B cell (primary cell): ENCODE measurements at regions of chr15 and their contacts with region 1.

Region 1: GRCh38 chr15:74407055-74407691 is 26.6 kb downstream of the SEMA7A start:
- DNase-seq: no peak
- ATAC-seq: no peak
- H3K4me3 ChIP-seq: no peak overlapping the region
- H3K4me3 Mint-ChIP-seq: no peak overlapping the region
- H3K27ac ChIP-seq: peak overlapping the region in 1 of 2 donors; percentile 11
- H3K27ac Mint-ChIP-seq: peak overlapping the region; percentile 59
- H3K4me1 ChIP-seq: peaks cover 38 to 59% of the 10 kb centered on the region in 2 donors
- H3K4me1 Mint-ChIP-seq: peaks cover 61% of the 10 kb centered on the region
- H3K27me3 ChIP-seq: no peaks in the 10 kb centered on the region
- H3K27me3 Mint-ChIP-seq: no peaks in the 10 kb centered on the region
- CTCF ChIP-seq: no peak

Region 2: GRCh38 chr15:74326451-74327145 is 80.6 kb before region 1 on chr15:
- CTCF ChIA-PET with region 1: no interaction called
- POLR2A ChIA-PET with region 1: no interaction called
- intact Hi-C with region 1: no loop called
- DNase-seq: no peak
- ATAC-seq: no peak
- H3K4me3 ChIP-seq: no peak overlapping the region
- H3K4me3 Mint-ChIP-seq: no peak overlapping the region
- H3K27ac ChIP-seq: no peak overlapping the region
- H3K27ac Mint-ChIP-seq: no peak overlapping the region
- H3K4me1 ChIP-seq: no peaks in the 10 kb centered on the region
- H3K4me1 Mint-ChIP-seq: peaks cover 2% of the 10 kb centered on the region
- H3K27me3 ChIP-seq: peaks cover 0 to 3% (median 0%) of the 10 kb centered on the region in 4 experiments
- H3K27me3 Mint-ChIP-seq: peaks cover 21% of the 10 kb centered on the region
- CTCF ChIP-seq: no peak

Region 3: GRCh38 chr15:74396445-74397238 is 10.5 kb before region 1 on chr15:
- CTCF ChIA-PET with region 1: interaction called, 4 read pairs
- POLR2A ChIA-PET with region 1: interaction called, 6 read pairs
- intact Hi-C with region 1: loop called (anchors 1 kb)
- DNase-seq: peak; percentile 95
- ATAC-seq: peak; percentile 73
- H3K4me3 ChIP-seq: peak overlapping the region in 2 of 5 experiments; percentile 1 to 49
- H3K4me3 Mint-ChIP-seq: peak overlapping the region; percentile 78
- H3K27ac ChIP-seq: peak overlapping the region; percentile 96 to 98
- H3K27ac Mint-ChIP-seq: peak overlapping the region; percentile 97
- H3K4me1 ChIP-seq: peaks cover 95 to 100% of the 10 kb centered on the region in 2 donors
- H3K4me1 Mint-ChIP-seq: peaks cover 98% of the 10 kb centered on the region
- H3K27me3 ChIP-seq: no peaks in the 10 kb centered on the region
- H3K27me3 Mint-ChIP-seq: no peaks in the 10 kb centered on the region
- CTCF ChIP-seq: peak; percentile 10

Region 4: DNA sequence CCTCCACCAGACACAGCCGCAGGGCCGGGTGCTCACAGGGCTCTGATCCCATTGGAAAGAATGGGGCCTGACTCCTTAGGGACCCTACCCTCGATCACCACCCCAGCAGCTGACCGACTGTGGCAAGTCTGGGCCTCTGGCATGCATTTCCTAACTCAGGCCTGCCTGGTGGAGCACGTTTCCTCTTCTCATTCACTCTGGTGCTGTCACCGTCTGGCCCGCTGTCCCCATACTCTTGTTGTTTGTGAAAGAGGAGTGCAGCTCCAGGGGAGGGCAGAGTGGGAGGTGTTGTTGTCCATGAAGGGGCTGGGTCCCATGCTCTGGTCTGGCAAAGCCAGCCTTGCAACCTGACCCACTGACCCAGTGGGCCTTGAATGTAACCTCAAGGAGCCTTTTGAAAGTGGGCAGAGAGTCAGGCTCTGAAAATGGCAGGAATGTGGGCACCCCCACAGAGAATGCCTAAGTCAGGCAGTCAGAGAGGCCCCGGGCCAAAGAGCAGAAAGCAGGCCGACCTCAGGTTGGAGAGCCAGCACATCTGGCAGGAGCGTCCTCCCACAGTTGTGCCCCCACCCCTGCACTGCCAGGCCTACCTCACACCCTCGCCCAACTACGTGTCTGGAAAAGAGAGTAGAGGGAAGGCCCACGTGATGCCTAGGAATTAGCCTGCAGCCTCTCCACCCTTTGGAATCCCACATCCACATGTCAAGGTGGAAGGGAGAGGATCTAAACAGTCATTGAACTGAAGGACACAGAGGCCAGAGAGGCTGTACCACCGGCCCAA is 15.7 kb after region 1 on chr15:
- CTCF ChIA-PET with region 1: interaction called, 26 read pairs
- POLR2A ChIA-PET with region 1: interaction called, 12 read pairs
- intact Hi-C with region 1: no loop called
- DNase-seq: peak; percentile 44
- ATAC-seq: peak; percentile 44
- H3K4me3 ChIP-seq: no peak overlapping the region
- H3K4me3 Mint-ChIP-seq: peak overlapping the region; percentile 74
- H3K27ac ChIP-seq: peak overlapping the region; percentile 14 to 57
- H3K27ac Mint-ChIP-seq: peak overlapping the region; percentile 91
- H3K4me1 ChIP-seq: peaks cover 79 to 100% of the 10 kb centered on the region in 2 donors
- H3K4me1 Mint-ChIP-seq: peaks cover 91% of the 10 kb centered on the region
- H3K27me3 ChIP-seq: no peaks in the 10 kb centered on the region
- H3K27me3 Mint-ChIP-seq: no peaks in the 10 kb centered on the region
- CTCF ChIP-seq: no peak

Region 5: GRCh38 chr15:74428442-74428787 is 21.2 kb after region 1 on chr15:
- CTCF ChIA-PET with region 1: interaction called, 26 read pairs
- POLR2A ChIA-PET with region 1: interaction called, 23 read pairs
- intact Hi-C with region 1: loop called (anchors 1 kb)
- DNase-seq: peak; percentile 48
- ATAC-seq: peak; percentile 14
- H3K4me3 ChIP-seq: peak overlapping the region in 2 of 5 experiments; percentile 27 to 82
- H3K4me3 Mint-ChIP-seq: peak overlapping the region; percentile 96
- H3K27ac ChIP-seq: peak overlapping the region; percentile 63 to 75
- H3K27ac Mint-ChIP-seq: peak overlapping the region; percentile 91
- H3K4me1 ChIP-seq: peaks cover 84 to 95% of the 10 kb centered on the region in 2 donors
- H3K4me1 Mint-ChIP-seq: peaks cover 91% of the 10 kb centered on the region
- H3K27me3 ChIP-seq: no peaks in the 10 kb centered on the region
- H3K27me3 Mint-ChIP-seq: no peaks in the 10 kb centered on the region
- CTCF ChIP-seq: no peak

Region 6: GRCh38 chr15:74433592-74434262 is 26.6 kb after region 1 on chr15 and contains the start of gene SEMA7A:
- CTCF ChIA-PET with region 1: interaction called, 34 read pairs
- POLR2A ChIA-PET with region 1: interaction called, 23 read pairs
- intact Hi-C with region 1: loop called (anchors 1 kb)
- DNase-seq: peak; percentile 92
- ATAC-seq: peak; percentile 80
- H3K4me3 ChIP-seq: peak within 1 kb of the TSS; percentile 60 to 89 (median 82)
- H3K4me3 Mint-ChIP-seq: peak within 1 kb of the TSS; percentile 96
- H3K27ac ChIP-seq: peak within 1 kb of the TSS; percentile 75 to 88
- H3K27ac Mint-ChIP-seq: peak within 1 kb of the TSS; percentile 92
- H3K4me1 ChIP-seq: peaks cover 57 to 69% of the 10 kb centered on the region in 2 donors
- H3K4me1 Mint-ChIP-seq: peaks cover 74% of the 10 kb centered on the region
- H3K27me3 ChIP-seq: no peaks in the 10 kb centered on the region
- H3K27me3 Mint-ChIP-seq: no peaks in the 10 kb centered on the region
- CTCF ChIP-seq: no peak
- total RNA-seq, gene SEMA7A: 39.0 and 44.2 TPM in 2 replicates